CD4-positive, alpha-beta memory T cell (primary cell): ENCODE measurements at regions of chr5 and their contacts with region 1.

Region 1: DNA sequence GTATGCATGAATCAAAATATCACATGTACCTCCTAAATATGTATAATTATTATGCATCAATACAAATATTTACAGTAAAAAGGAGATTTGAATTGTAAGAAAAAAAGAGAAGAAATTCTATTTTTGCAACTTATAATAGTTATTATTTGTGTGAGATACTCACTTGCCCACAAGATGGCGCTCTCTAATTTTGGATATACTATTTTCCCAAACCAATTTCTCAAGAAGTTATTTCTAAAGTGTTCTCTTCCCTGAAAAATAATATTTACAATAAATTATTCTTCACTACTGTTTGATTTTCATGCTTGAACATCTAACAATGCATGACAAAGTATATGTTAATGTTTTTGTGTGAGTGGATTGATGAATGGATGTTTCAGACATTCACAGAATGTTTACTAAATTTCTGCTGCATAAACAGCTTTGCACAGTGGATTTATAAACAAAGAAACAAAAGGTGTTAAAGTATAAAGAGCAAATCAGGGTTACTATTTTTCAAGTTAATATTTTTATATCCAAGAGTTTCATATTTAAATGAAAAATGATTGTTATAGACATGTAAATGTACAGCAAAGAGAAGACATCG is 503.4 kb downstream of the PDE4D start:
- DNase-seq: peak in 2 of 5 donors; percentile 11 to 25
- H3K4me3 ChIP-seq: no peak overlapping the region
- H3K4me3 Mint-ChIP-seq: no peak overlapping the region
- H3K27ac ChIP-seq: no peak overlapping the region
- H3K27ac Mint-ChIP-seq: no peak overlapping the region
- H3K4me1 ChIP-seq: no peaks in the 10 kb centered on the region
- H3K4me1 Mint-ChIP-seq: no peaks in the 10 kb centered on the region
- H3K27me3 ChIP-seq: no peaks in the 10 kb centered on the region
- H3K27me3 Mint-ChIP-seq: peaks cover 2 to 16% of the 10 kb centered on the region in 2 donors

Region 2: DNA sequence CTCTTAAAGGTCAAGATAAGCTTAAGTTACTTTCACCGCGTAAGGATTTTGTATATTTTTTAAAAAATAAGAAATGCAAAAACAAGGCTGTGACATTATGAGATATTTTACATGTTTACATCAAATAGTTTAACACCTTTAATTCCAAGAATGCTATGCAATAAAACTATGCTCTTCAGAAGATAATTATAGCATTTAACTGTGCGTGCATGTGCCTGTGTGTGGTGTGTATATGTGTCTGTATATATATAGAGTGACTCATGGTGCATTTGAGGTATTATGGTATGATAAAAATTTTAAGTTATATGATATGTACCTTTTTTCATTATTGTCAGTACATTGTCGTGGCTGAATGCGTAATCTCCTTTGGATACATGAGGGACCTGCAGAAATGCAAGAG is 35.9 kb before region 1 on chr5:
- CTCF ChIA-PET with region 1: no interaction called
- POLR2A ChIA-PET with region 1: no interaction called
- intact Hi-C with region 1: no loop called
- DNase-seq: no peak
- H3K4me3 ChIP-seq: no peak overlapping the region
- H3K4me3 Mint-ChIP-seq: no peak overlapping the region
- H3K27ac ChIP-seq: no peak overlapping the region
- H3K27ac Mint-ChIP-seq: no peak overlapping the region
- H3K4me1 ChIP-seq: no peaks in the 10 kb centered on the region
- H3K4me1 Mint-ChIP-seq: no peaks in the 10 kb centered on the region
- H3K27me3 ChIP-seq: no peaks in the 10 kb centered on the region
- H3K27me3 Mint-ChIP-seq: peaks cover 7 to 23% of the 10 kb centered on the region in 2 donors

Region 3: DNA sequence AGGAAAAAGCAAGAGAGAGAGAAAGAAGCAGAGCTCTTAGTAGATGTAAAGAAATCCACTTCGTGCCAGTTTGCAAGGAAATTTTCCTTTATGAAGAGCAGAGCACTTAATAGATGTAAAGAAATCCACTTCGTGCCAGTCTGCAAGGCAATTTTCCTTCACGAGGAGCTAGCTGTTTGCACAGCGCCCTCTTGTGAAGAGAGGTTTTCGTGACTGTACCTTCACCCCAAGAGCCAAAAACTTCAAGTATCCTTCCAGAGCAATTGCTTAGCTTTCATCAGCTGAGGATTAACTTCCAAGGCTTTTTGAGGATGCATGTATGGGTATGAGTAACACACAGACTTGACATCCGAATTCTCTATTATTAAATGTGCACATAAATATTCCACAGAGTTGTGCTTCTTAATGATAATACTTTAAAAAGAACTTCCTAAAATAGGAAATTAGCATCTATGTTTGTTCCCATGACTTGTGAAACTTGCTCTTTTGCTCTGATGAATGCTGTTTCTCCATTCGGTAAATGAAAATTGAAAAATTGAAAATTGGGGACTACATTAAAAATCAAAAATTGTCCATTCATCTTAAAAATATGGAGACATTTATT is 22.3 kb before region 1 on chr5:
- CTCF ChIA-PET with region 1: interaction called, 10 read pairs
- POLR2A ChIA-PET with region 1: no interaction called
- intact Hi-C with region 1: no loop called
- DNase-seq: peak in 4 of 5 donors; percentile 22 to 33 (median 28)
- H3K4me3 ChIP-seq: no peak overlapping the region
- H3K4me3 Mint-ChIP-seq: no peak overlapping the region
- H3K27ac ChIP-seq: no peak overlapping the region
- H3K27ac Mint-ChIP-seq: no peak overlapping the region
- H3K4me1 ChIP-seq: no peaks in the 10 kb centered on the region
- H3K4me1 Mint-ChIP-seq: peaks cover 0 to 2% (median under 1%) of the 10 kb centered on the region in 4 donors
- H3K27me3 ChIP-seq: no peaks in the 10 kb centered on the region
- H3K27me3 Mint-ChIP-seq: peaks cover 11 to 14% of the 10 kb centered on the region in 2 donors